CD8-positive, alpha-beta T cell (primary cell): ENCODE measurements at regions of chr5 and their contacts with region 1.

Region 1: DNA sequence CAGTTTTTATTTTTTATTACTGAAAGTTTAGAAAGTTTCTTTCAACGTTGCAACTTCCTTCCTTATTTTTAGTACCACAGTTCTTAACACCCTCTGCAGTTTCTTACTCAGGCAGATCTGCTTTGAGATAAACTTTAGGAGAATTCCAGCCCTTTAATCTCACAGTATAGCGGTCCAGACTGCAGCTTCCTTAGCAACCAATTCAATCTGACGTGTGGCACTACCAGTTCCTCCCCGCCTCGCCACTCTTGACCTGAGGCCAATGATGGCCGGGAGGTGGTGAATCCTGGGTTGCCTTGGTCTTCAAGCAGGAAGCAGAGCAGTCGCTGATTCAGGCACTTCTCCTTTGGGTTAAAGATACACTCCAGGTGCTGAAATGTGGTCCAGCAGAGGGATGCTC is 334.3 kb upstream of the TRPC7 start:
- DNase-seq: no peak
- ATAC-seq: no peak
- H3K4me3 ChIP-seq: no peak overlapping the region
- H3K4me3 Mint-ChIP-seq: no peak overlapping the region
- H3K27ac ChIP-seq: no peak overlapping the region
- H3K27ac Mint-ChIP-seq: no peak overlapping the region
- H3K4me1 ChIP-seq: no peaks in the 10 kb centered on the region
- H3K4me1 Mint-ChIP-seq: no peaks in the 10 kb centered on the region
- H3K27me3 ChIP-seq: no peaks in the 10 kb centered on the region
- H3K27me3 Mint-ChIP-seq: peaks cover 6% of the 10 kb centered on the region
- CTCF ChIP-seq: no peak

Region 2: DNA sequence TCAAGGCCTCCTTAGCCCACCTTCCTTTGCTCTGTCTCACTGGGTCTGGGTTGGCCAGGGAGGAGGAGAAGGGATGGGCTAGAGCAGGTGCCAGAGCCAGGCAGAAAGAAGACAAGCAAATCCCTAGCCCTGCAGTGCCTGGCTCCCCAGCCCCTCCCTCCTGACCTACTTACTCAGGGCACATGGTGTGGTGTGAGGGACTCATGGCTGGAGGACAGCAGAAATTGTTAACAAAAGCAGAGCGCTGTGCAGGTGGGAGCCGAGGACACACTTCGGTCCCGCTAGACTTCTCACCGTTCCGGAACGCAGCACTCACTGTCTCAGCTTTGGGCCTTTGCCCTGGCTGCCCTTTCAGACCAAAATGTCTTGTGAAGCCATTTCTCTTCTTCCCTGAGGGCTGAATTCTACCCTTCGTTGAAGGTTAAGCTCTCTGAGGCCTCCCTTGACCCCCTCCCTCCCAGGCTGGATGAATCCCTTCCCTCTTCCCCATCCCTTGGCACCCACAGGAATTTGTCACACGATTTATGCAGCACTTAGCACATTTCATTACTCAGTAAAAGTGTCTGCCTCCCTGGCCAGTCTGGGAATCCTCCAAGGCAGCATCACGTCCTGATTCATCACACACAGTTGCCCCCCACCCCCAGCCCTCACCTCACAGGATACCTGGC is 70.4 kb before region 1 on chr5:
- CTCF ChIA-PET with region 1: no interaction called
- POLR2A ChIA-PET with region 1: no interaction called
- intact Hi-C with region 1: loop called in 1 of 2 experiments (anchors 2 kb)
- DNase-seq: no peak
- ATAC-seq: no peak
- H3K4me3 ChIP-seq: no peak overlapping the region
- H3K4me3 Mint-ChIP-seq: no peak overlapping the region
- H3K27ac ChIP-seq: no peak overlapping the region
- H3K27ac Mint-ChIP-seq: no peak overlapping the region
- H3K4me1 ChIP-seq: no peaks in the 10 kb centered on the region
- H3K4me1 Mint-ChIP-seq: no peaks in the 10 kb centered on the region
- H3K27me3 ChIP-seq: no peaks in the 10 kb centered on the region
- H3K27me3 Mint-ChIP-seq: no peaks in the 10 kb centered on the region
- CTCF ChIP-seq: no peak

Region 3: GRCh38 chr5:137867664-137868063 is 1168.0 kb after region 1 on chr5 and contains the start of gene MYOT:
- CTCF ChIA-PET with region 1: no interaction called
- POLR2A ChIA-PET with region 1: no interaction called
- intact Hi-C with region 1: no loop called
- DNase-seq: no peak
- ATAC-seq: no peak
- H3K4me3 ChIP-seq: no peak within 1 kb of the TSS
- H3K4me3 Mint-ChIP-seq: no peak within 1 kb of the TSS
- H3K27ac ChIP-seq: no peak within 1 kb of the TSS
- H3K27ac Mint-ChIP-seq: no peak within 1 kb of the TSS
- H3K4me1 ChIP-seq: no peaks in the 10 kb centered on the region
- H3K4me1 Mint-ChIP-seq: no peaks in the 10 kb centered on the region
- H3K27me3 ChIP-seq: no peaks in the 10 kb centered on the region
- H3K27me3 Mint-ChIP-seq: no peaks in the 10 kb centered on the region
- CTCF ChIP-seq: no peak
- total RNA-seq, gene MYOT: not detected